ENCODE measurements at regions of chr3 and their contacts with region 1.

Region 1: DNA sequence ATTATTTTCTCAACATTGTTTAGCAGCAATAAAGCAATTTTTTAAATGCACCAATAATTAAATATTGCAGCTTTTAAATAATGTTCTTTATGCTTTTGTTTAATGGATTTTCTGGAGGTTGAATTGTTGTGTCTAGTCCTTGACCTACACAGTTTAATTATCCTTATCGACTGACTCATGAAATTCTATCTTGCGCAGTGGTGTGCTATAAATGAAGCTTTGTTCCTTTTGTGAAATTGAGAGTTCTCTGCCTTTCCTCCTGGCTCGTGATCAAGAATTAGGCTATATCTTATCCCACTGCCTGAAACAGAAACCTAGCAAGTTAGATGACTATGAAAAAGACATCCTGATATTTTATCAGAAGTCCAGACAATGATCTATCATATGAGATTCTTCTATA is 37.0 kb upstream of the PIK3R4 start:
- DNase-seq: no peak
- ATAC-seq: no peak

Region 2: GRCh38 chr3:129132097-129132866 is 1651.3 kb before region 1 on chr3:
- intact Hi-C with region 1: loop called (anchors 10 kb)
- DNase-seq: no peak
- ATAC-seq: no peak

Region 3: GRCh38 chr3:131142580-131142979 is 359.0 kb after region 1 on chr3:
- intact Hi-C with region 1: no loop called
- DNase-seq: no peak
- ATAC-seq: no peak